Lower leg skin (tissue), 4 donors: ENCODE measurements at regions of chr15 and their contacts with region 1.

Region 1: GRCh38 chr15:66619151-66619903 is 53.5 kb upstream of the LCTL start:
- DNase-seq: peak; percentile 54 to 95
- H3K4me3 ChIP-seq: no peak overlapping the region
- CTCF ChIP-seq: no peak
- POLR2A ChIP-seq: no peak

Region 2: DNA sequence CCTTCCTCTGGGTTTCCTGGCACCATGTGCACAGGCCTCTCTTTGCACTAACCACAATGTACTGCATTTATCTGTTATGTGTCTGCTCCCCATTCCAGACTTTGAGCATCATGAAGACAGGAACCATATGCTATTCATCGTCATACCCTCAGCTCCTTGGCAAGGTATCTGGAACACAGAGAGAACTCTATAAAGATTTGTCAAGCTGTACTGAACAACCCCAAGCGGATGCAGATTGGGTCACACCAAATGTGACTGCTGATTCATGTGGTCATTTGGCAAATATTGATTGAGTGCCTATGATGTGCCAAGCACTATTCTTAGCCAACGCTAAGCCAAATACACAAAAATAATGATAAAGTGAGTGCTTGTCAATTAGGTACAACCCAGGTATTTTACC is 358.3 kb before region 1 on chr15:
- intact Hi-C with region 1: no loop called
- DNase-seq: no peak
- H3K4me3 ChIP-seq: no peak overlapping the region
- CTCF ChIP-seq: no peak
- POLR2A ChIP-seq: no peak

Region 3: DNA sequence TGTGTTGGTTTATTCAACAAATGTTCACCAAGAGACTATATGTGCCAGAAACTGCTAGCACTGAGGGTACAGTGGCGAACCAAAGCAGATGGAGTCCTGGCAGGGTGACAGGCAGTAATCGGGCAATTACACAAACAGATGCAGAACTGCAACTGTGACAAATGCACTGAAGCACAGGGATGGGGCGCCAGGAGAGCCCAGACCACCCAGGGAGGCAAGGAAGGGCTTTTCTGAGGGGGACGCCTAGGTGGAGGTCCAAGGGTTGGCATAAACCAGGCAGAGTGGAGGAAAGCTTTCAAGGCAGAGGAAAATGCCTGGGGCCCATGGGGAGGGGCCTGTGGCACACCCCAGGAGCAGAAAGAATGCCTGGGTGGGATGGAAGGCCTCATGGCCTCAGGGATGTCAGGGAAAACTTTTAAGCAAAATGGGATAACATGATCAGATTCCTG is 320.5 kb before region 1 on chr15:
- intact Hi-C with region 1: no loop called
- DNase-seq: peak in 1 of 2 donors; percentile 17
- H3K4me3 ChIP-seq: no peak overlapping the region
- CTCF ChIP-seq: no peak
- POLR2A ChIP-seq: no peak

Region 4: GRCh38 chr15:66698318-66698961 is 79.1 kb after region 1 on chr15:
- intact Hi-C with region 1: loop called (anchors 10 kb)
- DNase-seq: no peak
- H3K4me3 ChIP-seq: no peak overlapping the region
- CTCF ChIP-seq: no peak
- POLR2A ChIP-seq: no peak

Region 5: GRCh38 chr15:66774001-66774814 is 154.9 kb after region 1 on chr15:
- intact Hi-C with region 1: loop called (anchors 5 kb)
- DNase-seq: peak; percentile 78 to 97
- H3K4me3 ChIP-seq: no peak overlapping the region
- CTCF ChIP-seq: peak in 1 of 3 donors; percentile 96
- POLR2A ChIP-seq: no peak